ENCODE measurements at regions of chr20 and their contacts with region 1.

Region 1: GRCh38 chr20:21860871-21861270 is 155.4 kb downstream of the PAX1 start:
- DNase-seq: no peak
- H3K4me3 ChIP-seq: no peak overlapping the region
- H3K27ac ChIP-seq: no peak overlapping the region
- H3K4me1 ChIP-seq: no peaks in the 10 kb centered on the region
- CTCF ChIP-seq: no peak

Region 2: DNA sequence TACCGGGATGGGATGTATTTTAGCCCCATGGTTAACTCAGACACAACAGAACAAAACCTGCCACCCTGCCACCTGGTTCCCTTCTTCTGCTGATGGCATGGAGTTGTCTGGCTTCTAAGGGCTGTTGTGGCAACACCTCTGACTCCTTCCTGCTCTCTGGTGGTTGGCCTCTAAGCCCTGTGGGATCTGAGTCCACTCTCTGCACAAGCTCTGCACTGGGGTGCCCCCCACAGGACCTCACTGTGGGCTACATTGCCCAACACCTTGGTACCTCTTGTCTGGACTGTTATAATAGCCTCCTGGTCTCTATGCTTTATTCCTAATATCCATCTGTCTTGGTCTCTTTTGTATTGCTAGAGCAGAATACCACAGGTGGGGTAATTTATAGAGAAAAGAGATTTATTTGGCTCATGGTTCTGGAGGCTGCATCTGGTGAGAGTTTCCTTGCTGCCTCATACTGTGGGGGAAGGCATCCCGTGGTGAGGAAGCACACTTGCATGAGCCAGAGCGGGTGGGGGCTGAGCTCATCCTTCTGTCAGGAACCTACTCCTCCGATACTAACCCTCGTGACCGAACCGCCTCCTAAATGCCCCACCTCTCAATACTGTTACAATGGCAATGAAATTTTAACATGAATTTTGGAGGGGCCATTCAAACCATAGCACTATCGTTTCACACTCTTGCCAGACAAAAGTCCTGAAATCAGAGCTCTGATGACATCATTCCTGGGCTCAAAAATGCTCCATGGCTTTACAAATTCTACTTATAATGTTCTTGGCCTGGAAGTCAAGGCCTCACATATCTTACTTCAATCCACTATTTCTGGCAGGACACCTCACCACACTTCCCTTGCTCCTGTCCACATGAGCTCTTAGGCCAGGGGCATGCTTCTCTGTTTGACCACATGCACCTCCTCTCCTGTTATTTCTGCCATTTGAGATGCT is 28.2 kb before region 1 on chr20:
- CTCF ChIA-PET with region 1: no interaction called
- POLR2A ChIA-PET with region 1: no interaction called
- intact Hi-C with region 1: no loop called
- DNase-seq: peak; percentile 1
- H3K4me3 ChIP-seq: no peak overlapping the region
- H3K27ac ChIP-seq: no peak overlapping the region
- H3K4me1 ChIP-seq: no peaks in the 10 kb centered on the region
- CTCF ChIP-seq: no peak

Region 3: GRCh38 chr20:21874127-21874526 is 13.3 kb after region 1 on chr20:
- CTCF ChIA-PET with region 1: no interaction called
- POLR2A ChIA-PET with region 1: no interaction called
- intact Hi-C with region 1: loop called (anchors 1 kb)
- DNase-seq: no peak
- H3K4me3 ChIP-seq: no peak overlapping the region
- H3K27ac ChIP-seq: no peak overlapping the region
- H3K4me1 ChIP-seq: no peaks in the 10 kb centered on the region
- CTCF ChIP-seq: no peak

Measured in OCI-LY7 (cell line).